ENCODE measurements at regions of chr5 and their contacts with region 1.

Region 1: DNA sequence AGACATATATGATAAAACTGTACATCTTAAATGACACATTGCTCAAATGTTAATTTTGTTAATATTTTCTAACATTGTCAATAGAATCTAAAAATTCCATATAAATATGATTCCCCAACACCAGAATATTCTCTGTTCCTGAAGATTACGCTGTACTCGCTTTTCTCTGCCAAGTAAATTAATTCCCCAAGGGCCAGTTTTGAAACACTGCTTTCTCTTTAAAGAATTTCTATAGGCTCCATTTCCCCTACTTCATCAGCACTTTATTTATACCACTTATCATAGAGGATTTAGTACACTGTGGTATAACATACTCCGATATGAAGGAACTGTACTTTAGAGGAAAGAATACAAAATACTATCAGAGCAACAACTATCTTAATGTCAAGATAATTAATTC is 101.4 kb upstream of the ACOT12 start:
- DNase-seq: no peak
- ATAC-seq: no peak
- H3K4me3 ChIP-seq: no peak overlapping the region
- H3K27ac ChIP-seq: no peak overlapping the region
- H3K4me1 ChIP-seq: no peaks in the 10 kb centered on the region
- H3K27me3 ChIP-seq: no peaks in the 10 kb centered on the region
- CTCF ChIP-seq: no peak

Region 2: GRCh38 chr5:81542242-81542641 is 47.0 kb after region 1 on chr5:
- intact Hi-C with region 1: loop called in 1 of 10 experiments (anchors 1 kb)
- DNase-seq: no peak
- ATAC-seq: no peak
- H3K4me3 ChIP-seq: no peak overlapping the region
- H3K27ac ChIP-seq: no peak overlapping the region
- H3K4me1 ChIP-seq: no peaks in the 10 kb centered on the region
- H3K27me3 ChIP-seq: no peaks in the 10 kb centered on the region
- CTCF ChIP-seq: no peak

Region 3: DNA sequence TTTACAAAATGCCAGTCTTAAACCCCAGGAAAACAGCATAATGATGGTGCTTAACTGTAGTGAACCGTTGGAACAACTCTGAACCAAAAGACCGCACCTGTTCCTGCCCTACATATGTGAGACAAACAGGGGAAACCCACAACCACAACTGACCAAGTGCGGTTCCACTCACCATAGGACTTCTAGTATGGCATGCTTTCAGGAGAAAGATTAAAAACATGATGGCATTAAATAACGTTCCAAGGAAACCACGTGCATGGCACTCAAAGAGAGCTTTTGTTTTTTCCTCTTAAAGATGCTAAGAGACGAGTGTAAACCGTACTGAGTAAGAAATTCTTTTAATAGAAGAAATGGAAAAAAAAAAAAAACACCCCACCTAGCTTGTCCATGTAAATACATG is 135.8 kb after region 1 on chr5:
- intact Hi-C with region 1: no loop called
- DNase-seq: no peak
- ATAC-seq: no peak
- H3K4me3 ChIP-seq: no peak overlapping the region
- H3K27ac ChIP-seq: no peak overlapping the region
- H3K4me1 ChIP-seq: peaks cover 0 to 14% (median 11%) of the 10 kb centered on the region in 9 donors
- H3K27me3 ChIP-seq: no peaks in the 10 kb centered on the region
- CTCF ChIP-seq: no peak